Spleen (tissue), 13 donors: ENCODE measurements at regions of chr1 and their contacts with region 1.

Region 1: DNA sequence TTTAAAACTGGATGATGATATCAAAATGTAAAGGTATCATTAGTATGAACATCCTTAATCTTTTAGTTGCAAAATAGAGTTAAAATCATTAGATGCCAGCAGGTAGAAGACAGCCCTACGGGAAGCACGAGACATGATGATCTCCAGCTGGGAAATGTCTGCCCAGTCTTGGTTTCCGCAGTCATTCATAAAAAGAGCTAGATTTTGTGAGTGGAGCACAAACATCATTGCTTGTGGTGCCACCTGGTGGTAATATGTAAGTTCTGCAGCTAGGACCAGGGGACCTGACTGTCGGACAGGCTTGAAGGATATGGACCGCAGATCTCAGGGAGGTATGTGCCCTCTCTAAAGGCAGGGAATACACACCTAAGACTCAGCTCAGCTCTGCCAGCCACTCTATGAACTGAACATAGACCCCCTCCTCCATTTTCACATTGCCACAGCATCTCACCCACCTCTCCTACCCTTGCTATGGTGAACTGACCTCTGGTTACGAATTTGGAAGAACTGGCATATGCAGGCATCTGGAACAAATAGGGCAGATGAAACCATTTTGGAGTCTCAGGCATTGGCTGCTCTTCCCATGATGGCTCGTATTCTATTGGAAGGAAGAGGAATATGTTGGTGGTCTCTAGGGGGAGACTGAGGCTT is 9.2 kb downstream of the FCMR start:
- DNase-seq: peak; percentile 73
- H3K4me3 ChIP-seq: peak overlapping the region in 2 of 8 donors; percentile 9 to 74
- H3K27ac ChIP-seq: peak overlapping the region in 1 of 8 donors; percentile 71
- H3K4me1 ChIP-seq: peaks cover 46 to 100% (median 97%) of the 10 kb centered on the region in 6 donors
- H3K27me3 ChIP-seq: peaks cover 0 to 35% (median 0%) of the 10 kb centered on the region in 7 donors
- CTCF ChIP-seq: peak; percentile 84 to 95 (median 91)
- POLR2A ChIP-seq: no peak

Region 2: GRCh38 chr1:206635080-206635977 is 277.2 kb before region 1 on chr1 and contains the start of gene DYRK3:
- intact Hi-C with region 1: loop called (anchors 10 kb)
- DNase-seq: peak; percentile 97
- H3K4me3 ChIP-seq: peak within 1 kb of the TSS; percentile 68 to 96 (median 86)
- H3K27ac ChIP-seq: peak within 1 kb of the TSS in 7 of 8 donors; percentile 56 to 80 (median 68)
- H3K4me1 ChIP-seq: peaks cover 8 to 46% (median 28%) of the 10 kb centered on the region in 6 donors
- H3K27me3 ChIP-seq: peaks cover 0 to 11% (median 0%) of the 10 kb centered on the region in 7 donors
- CTCF ChIP-seq: peak in 7 of 11 experiments; percentile 5 to 49 (median 31)
- POLR2A ChIP-seq: peak in 1 of 3 donors; percentile 56
- total RNA-seq, gene DYRK3: 2.4 to 6.6 (median 4.3) TPM

Region 3: GRCh38 chr1:206734499-206735142 is 177.9 kb before region 1 on chr1:
- intact Hi-C with region 1: loop called (anchors 5 kb)
- DNase-seq: peak; percentile 85
- H3K4me3 ChIP-seq: no peak overlapping the region
- H3K27ac ChIP-seq: peak overlapping the region in 5 of 8 donors; percentile 13 to 77 (median 73)
- H3K4me1 ChIP-seq: peaks cover 19 to 84% (median 56%) of the 10 kb centered on the region in 6 donors
- H3K27me3 ChIP-seq: no peaks in the 10 kb centered on the region
- CTCF ChIP-seq: peak; percentile 66 to 90 (median 86)
- POLR2A ChIP-seq: no peak

Region 4: DNA sequence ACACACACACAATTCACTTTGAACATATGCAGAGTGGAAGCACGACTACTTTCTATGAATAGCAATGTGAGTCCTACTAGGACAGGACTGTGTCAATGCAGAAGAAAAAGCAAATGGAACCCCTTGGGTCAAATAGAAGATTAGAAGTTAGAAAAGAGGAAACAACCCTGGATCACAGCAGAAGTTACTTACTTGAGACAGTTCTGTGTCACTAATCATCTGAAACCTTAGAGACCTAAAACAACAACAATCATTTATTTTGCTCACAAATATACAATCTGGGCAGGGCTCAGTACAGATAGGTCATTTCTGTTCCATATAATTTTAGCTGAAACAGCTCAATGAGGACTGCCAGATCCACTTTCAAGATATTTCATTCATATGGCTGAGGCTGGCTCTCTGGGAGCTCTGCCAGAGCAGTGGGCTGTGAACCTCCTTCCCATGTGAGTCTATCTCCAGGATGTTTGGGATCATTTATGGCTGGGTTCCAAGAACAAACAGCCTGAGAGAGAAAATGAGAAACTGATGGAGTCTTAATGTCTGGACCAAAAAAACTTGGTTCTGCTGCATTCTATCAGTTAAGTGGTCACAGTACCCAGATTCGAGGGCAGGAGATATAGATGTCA is 97.7 kb before region 1 on chr1:
- intact Hi-C with region 1: loop called (anchors 5 kb)
- DNase-seq: no peak
- H3K4me3 ChIP-seq: no peak overlapping the region
- H3K27ac ChIP-seq: peak overlapping the region in 6 of 8 donors; percentile 40 to 68 (median 60)
- H3K4me1 ChIP-seq: peaks cover 5 to 51% (median 31%) of the 10 kb centered on the region in 6 donors
- H3K27me3 ChIP-seq: no peaks in the 10 kb centered on the region
- CTCF ChIP-seq: no peak
- POLR2A ChIP-seq: no peak